Activated CD4-positive, alpha-beta T cell treated with anti-CD3 and anti-CD28 coated beads for 36 hours (primary cell): ENCODE measurements at regions of chr12 and their contacts with region 1.

Region 1: GRCh38 chr12:87368259-87368658 is 660.9 kb downstream of the C12orf50 start:
- DNase-seq: no peak
- ATAC-seq: no peak
- H3K4me3 Mint-ChIP-seq: no peak overlapping the region
- H3K27ac Mint-ChIP-seq: no peak overlapping the region
- H3K4me1 Mint-ChIP-seq: no peaks in the 10 kb centered on the region
- H3K27me3 Mint-ChIP-seq: no peaks in the 10 kb centered on the region

Region 2: DNA sequence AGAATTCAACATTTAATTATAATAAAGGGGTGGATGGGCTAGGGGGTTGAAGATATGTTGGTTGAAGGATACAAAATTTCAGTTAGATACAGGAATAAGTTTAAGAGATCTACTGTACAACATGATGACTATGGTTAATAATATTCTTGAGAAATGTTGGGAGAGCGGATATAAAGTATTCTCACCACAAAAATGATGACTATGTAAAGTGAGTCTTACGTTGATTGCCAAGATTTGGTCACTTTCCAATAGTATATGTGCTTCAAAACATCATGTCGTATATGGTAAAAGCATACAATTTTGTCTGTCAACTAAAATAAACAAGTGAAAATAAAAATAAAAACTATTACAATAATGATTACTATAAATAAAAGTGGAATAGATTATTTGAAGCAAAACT is 141.1 kb before region 1 on chr12:
- CTCF ChIA-PET with region 1: no interaction called
- POLR2A ChIA-PET with region 1: no interaction called
- intact Hi-C with region 1: no loop called
- DNase-seq: no peak
- ATAC-seq: no peak
- H3K4me3 Mint-ChIP-seq: no peak overlapping the region
- H3K27ac Mint-ChIP-seq: no peak overlapping the region
- H3K4me1 Mint-ChIP-seq: no peaks in the 10 kb centered on the region
- H3K27me3 Mint-ChIP-seq: no peaks in the 10 kb centered on the region

Region 3: DNA sequence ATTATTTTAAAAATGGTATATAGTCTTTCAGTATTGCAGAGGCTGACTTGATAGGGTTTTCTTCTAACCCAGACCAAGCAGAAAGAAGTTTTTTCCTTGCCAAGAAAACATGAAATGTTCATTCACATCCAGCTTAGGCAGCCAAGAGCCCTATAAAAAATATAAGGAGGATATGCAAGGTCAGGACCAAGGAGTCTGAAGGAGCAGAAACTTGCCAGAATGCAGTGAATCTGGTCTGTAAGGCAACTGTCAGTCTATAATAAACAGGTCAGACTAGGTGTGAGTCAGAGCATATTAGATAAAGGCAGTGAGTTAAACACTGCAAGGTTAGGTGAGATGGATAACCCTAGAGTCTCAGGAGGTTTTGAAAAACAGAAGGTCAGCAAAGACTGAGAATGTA is 15.4 kb after region 1 on chr12:
- CTCF ChIA-PET with region 1: no interaction called
- POLR2A ChIA-PET with region 1: no interaction called
- intact Hi-C with region 1: loop called in 1 of 2 experiments (anchors 1 kb)
- DNase-seq: no peak
- ATAC-seq: no peak
- H3K4me3 Mint-ChIP-seq: no peak overlapping the region
- H3K27ac Mint-ChIP-seq: no peak overlapping the region
- H3K4me1 Mint-ChIP-seq: no peaks in the 10 kb centered on the region
- H3K27me3 Mint-ChIP-seq: no peaks in the 10 kb centered on the region